Caco-2 (cell line): ENCODE measurements at regions of chr4 and their contacts with region 1.

Region 1: GRCh38 chr4:73434311-73434710 is 1.7 kb upstream of the AFP start:
- DNase-seq: no peak
- H3K4me3 ChIP-seq: no peak overlapping the region
- H3K4me3 Mint-ChIP-seq: no peak overlapping the region
- H3K27ac Mint-ChIP-seq: no peak overlapping the region
- H3K4me1 ChIP-seq: peaks cover 50% of the 10 kb centered on the region
- H3K4me1 Mint-ChIP-seq: peaks cover 31% of the 10 kb centered on the region
- H3K27me3 ChIP-seq: no peaks in the 10 kb centered on the region
- H3K27me3 Mint-ChIP-seq: no peaks in the 10 kb centered on the region
- CTCF ChIP-seq: peak in 1 of 2 experiments; percentile 32

Region 2: GRCh38 chr4:73308286-73308685 is 126.0 kb before region 1 on chr4:
- CTCF ChIA-PET with region 1: no interaction called
- POLR2A ChIA-PET with region 1: no interaction called
- intact Hi-C with region 1: no loop called
- DNase-seq: no peak
- H3K4me3 ChIP-seq: no peak overlapping the region
- H3K4me3 Mint-ChIP-seq: no peak overlapping the region
- H3K27ac Mint-ChIP-seq: no peak overlapping the region
- H3K4me1 ChIP-seq: no peaks in the 10 kb centered on the region
- H3K4me1 Mint-ChIP-seq: peaks cover 11% of the 10 kb centered on the region
- H3K27me3 ChIP-seq: no peaks in the 10 kb centered on the region
- H3K27me3 Mint-ChIP-seq: no peaks in the 10 kb centered on the region
- CTCF ChIP-seq: peak; percentile 23 to 40

Region 3: GRCh38 chr4:73388887-73389286 is 45.4 kb before region 1 on chr4:
- CTCF ChIA-PET with region 1: no interaction called
- POLR2A ChIA-PET with region 1: no interaction called
- intact Hi-C with region 1: loop called (anchors 1 kb)
- DNase-seq: peak in 1 of 2 experiments; percentile 10
- H3K4me3 ChIP-seq: no peak overlapping the region
- H3K4me3 Mint-ChIP-seq: no peak overlapping the region
- H3K27ac Mint-ChIP-seq: no peak overlapping the region
- H3K4me1 ChIP-seq: peaks cover 23% of the 10 kb centered on the region; the same call in 1 of the 2 replicates
- H3K4me1 Mint-ChIP-seq: peaks cover 9% of the 10 kb centered on the region
- H3K27me3 ChIP-seq: no peaks in the 10 kb centered on the region
- H3K27me3 Mint-ChIP-seq: no peaks in the 10 kb centered on the region
- CTCF ChIP-seq: no peak

Region 4: DNA sequence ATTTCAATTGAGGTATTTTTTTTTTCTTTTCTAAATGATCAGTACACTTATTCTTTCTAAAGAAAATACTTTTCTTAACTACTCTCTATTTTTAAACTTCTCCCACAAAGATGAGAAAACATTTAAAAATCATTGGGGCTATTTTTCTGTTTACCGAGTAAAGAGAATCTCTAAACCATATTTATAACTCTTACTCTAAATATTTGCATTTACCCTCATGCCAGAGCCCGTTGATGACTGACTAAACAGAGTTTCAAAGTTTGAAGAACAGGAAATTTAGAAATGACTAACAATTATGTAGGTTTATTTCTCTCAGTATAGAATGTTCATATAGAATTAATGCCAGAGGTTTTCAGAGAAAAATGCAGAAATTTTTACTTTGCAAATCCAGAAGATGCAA is 32.9 kb before region 1 on chr4:
- CTCF ChIA-PET with region 1: no interaction called
- POLR2A ChIA-PET with region 1: no interaction called
- intact Hi-C with region 1: loop called (anchors 1 kb)
- DNase-seq: no peak
- H3K4me3 ChIP-seq: no peak overlapping the region
- H3K4me3 Mint-ChIP-seq: no peak overlapping the region
- H3K27ac Mint-ChIP-seq: no peak overlapping the region
- H3K4me1 ChIP-seq: peaks cover 6% of the 10 kb centered on the region
- H3K4me1 Mint-ChIP-seq: peaks cover 9% of the 10 kb centered on the region
- H3K27me3 ChIP-seq: no peaks in the 10 kb centered on the region
- H3K27me3 Mint-ChIP-seq: no peaks in the 10 kb centered on the region
- CTCF ChIP-seq: no peak

Region 5: DNA sequence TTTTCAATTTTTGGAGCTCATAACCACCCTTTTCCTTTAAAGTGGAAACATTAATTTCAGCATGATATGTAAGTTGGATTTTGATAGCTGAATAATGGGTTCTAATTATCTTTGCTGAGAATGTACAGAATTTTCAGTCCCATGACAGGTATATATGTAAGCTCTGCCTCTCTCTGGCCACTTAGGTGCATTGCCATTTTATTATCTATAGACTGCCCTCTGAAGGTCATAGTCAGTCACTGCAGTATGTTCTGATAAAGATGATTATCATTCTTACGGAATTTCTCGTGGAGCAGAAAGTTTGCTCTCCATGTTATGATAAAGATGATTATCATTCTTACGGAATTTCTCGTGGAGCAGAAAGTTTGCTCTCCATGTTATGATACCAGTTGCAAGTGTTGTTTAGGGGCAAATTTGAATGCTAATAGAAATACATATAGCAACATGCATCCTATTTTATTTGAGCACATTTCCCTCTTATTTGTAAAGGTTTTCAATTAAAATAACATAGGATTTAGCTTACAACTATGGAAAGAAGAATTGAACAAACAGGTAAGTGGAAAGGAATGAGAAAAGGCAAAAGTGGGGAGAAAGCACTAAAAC is 12.1 kb after region 1 on chr4:
- CTCF ChIA-PET with region 1: interaction called, 7 read pairs
- POLR2A ChIA-PET with region 1: no interaction called
- intact Hi-C with region 1: loop called (anchors 1 kb)
- DNase-seq: peak; percentile 36 to 45
- H3K4me3 ChIP-seq: no peak overlapping the region
- H3K4me3 Mint-ChIP-seq: no peak overlapping the region
- H3K27ac Mint-ChIP-seq: no peak overlapping the region
- H3K4me1 ChIP-seq: peaks cover 21% of the 10 kb centered on the region
- H3K4me1 Mint-ChIP-seq: no peaks in the 10 kb centered on the region
- H3K27me3 ChIP-seq: no peaks in the 10 kb centered on the region
- H3K27me3 Mint-ChIP-seq: no peaks in the 10 kb centered on the region
- CTCF ChIP-seq: peak; percentile 76 to 81

Region 6: DNA sequence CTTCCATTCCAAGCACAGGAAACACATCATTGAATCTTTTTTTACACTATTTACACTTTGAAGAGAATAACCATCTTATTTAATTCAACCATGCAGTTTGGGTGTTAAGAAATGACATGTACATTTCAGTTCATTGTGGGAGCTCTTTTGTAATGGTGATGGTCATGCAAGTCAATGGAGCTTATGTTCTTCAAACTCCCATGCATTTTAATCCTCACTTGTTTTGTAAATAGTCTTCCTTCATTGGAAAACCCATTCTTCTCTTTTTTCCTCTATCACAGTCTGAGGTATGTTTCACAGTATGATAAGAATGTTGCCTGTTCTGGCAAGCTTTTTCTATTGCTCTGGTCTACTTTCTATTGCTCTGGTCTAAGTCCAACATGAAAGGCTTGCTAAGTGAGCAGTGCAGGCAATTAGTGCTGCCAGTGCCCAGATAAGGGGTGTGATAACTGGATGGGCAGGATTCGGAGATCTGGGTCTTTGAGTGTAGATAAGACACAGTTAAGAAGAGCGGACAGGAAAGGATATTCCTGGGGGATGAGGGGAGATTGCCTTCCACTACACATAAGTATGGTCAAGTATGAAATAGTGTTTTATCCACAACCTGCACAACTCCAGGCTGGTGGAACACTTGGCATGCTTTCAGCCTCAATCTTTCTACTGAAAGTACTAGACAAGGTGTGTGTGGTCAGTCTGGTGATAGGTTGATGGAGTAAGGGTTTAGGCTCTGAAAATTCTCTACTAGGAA is 18.8 kb after region 1 on chr4:
- CTCF ChIA-PET with region 1: no interaction called
- POLR2A ChIA-PET with region 1: no interaction called
- intact Hi-C with region 1: loop called (anchors 1 kb)
- DNase-seq: peak; percentile 70 to 90
- H3K4me3 ChIP-seq: no peak overlapping the region
- H3K4me3 Mint-ChIP-seq: peak overlapping the region; percentile 48
- H3K27ac Mint-ChIP-seq: peak overlapping the region; percentile 19
- H3K4me1 ChIP-seq: peaks cover 44% of the 10 kb centered on the region
- H3K4me1 Mint-ChIP-seq: peaks cover 23% of the 10 kb centered on the region
- H3K27me3 ChIP-seq: no peaks in the 10 kb centered on the region
- H3K27me3 Mint-ChIP-seq: no peaks in the 10 kb centered on the region
- CTCF ChIP-seq: no peak

Region 7: DNA sequence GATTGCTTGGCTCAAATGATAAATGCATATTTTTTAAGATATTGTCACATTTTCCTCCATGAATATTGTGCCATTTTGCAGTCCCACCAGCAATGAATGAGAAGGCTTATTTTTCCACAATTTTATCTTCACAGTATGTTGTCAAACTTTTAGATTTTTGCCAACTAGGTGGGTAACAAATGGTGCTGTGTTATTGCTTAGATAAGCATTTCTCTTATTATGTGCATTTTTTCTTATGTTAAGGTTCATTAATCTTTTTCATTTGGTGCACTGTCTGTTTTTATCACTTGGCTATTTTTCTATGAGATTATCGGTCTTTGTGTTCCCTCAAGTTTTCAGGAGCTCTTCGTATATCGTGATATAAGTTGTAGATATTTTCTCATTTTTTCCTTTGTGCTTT is 33.9 kb after region 1 on chr4:
- CTCF ChIA-PET with region 1: no interaction called
- POLR2A ChIA-PET with region 1: no interaction called
- intact Hi-C with region 1: no loop called
- DNase-seq: no peak
- H3K4me3 ChIP-seq: no peak overlapping the region
- H3K4me3 Mint-ChIP-seq: no peak overlapping the region
- H3K27ac Mint-ChIP-seq: no peak overlapping the region
- H3K4me1 ChIP-seq: no peaks in the 10 kb centered on the region
- H3K4me1 Mint-ChIP-seq: no peaks in the 10 kb centered on the region
- H3K27me3 ChIP-seq: no peaks in the 10 kb centered on the region
- H3K27me3 Mint-ChIP-seq: peaks cover 2% of the 10 kb centered on the region
- CTCF ChIP-seq: no peak

Region 8: DNA sequence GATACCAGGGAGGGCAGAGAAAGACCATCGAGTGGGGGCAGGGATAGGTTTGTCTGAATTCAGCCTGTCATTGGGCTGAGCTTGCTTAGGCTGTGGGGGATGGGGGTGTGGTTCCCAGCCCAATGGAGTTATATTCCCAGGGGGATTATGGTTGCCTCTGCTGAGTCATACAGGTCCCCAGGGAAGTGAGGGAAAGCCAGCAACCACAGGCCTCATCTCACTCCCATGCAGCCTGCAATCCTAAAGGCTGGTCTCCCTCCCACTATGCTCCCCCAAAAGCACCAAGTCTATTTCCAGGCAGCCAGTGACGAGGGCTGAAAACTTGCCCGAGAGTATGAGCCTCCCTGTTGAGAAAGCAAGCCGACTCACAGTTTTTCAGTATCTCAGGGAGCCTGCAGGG is 86.5 kb after region 1 on chr4:
- CTCF ChIA-PET with region 1: no interaction called
- POLR2A ChIA-PET with region 1: no interaction called
- intact Hi-C with region 1: no loop called
- DNase-seq: no peak
- H3K4me3 ChIP-seq: no peak overlapping the region
- H3K4me3 Mint-ChIP-seq: no peak overlapping the region
- H3K27ac Mint-ChIP-seq: no peak overlapping the region
- H3K4me1 ChIP-seq: no peaks in the 10 kb centered on the region
- H3K4me1 Mint-ChIP-seq: no peaks in the 10 kb centered on the region
- H3K27me3 ChIP-seq: no peaks in the 10 kb centered on the region
- H3K27me3 Mint-ChIP-seq: no peaks in the 10 kb centered on the region
- CTCF ChIP-seq: no peak

Region 9: GRCh38 chr4:73593631-73594241 is 159.4 kb after region 1 on chr4:
- CTCF ChIA-PET with region 1: no interaction called
- POLR2A ChIA-PET with region 1: no interaction called
- intact Hi-C with region 1: no loop called
- DNase-seq: peak in 1 of 2 experiments; percentile 26
- H3K4me3 ChIP-seq: no peak overlapping the region
- H3K4me3 Mint-ChIP-seq: no peak overlapping the region
- H3K27ac Mint-ChIP-seq: no peak overlapping the region
- H3K4me1 ChIP-seq: peaks cover 7% of the 10 kb centered on the region
- H3K4me1 Mint-ChIP-seq: peaks cover 1% of the 10 kb centered on the region
- H3K27me3 ChIP-seq: no peaks in the 10 kb centered on the region
- H3K27me3 Mint-ChIP-seq: no peaks in the 10 kb centered on the region
- CTCF ChIP-seq: peak; percentile 58 to 69